ENCODE measurements at regions of chr17 and their contacts with region 1.

Region 1: DNA sequence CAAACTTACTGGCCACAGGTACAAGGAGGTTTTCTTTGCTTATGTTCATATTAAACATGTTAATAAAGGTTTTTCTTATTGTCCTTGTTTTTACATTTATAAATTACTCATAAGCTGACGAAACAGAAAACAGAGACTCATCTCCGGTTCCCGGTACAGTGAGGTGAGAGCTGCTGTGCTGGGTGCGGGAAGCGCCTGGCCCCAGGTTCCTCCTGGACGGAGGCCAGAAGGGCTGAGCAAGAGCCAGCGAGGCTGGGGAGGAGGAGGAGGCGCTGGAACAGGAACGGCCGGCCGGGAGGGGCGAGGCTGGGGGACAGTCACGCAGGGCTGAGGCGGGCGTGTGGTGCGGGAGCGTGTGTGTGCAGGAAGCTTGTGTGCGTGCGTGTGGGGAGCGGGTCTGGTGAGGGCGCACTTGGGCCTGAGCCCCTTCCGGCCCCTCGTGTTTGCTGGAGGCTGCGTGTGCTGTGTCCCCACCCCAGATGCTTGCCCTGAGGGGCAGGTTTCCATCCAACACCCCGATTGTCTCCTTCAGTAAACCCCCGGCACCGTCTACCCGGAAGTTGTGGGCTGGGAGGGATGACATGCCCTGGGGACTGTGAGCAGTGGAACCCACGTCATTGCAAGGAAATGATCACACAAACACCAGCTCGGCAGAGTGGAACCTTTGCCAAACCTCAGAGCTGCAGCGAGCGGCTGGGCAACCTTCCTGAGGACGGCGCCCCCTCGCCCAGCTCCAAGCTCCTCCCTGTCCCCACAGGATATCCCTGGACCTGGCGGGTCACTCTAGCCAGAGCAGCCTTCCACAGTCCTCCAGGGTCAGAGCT is 19.5 kb downstream of the CD7 start:
- DNase-seq: peak; percentile 96
- H3K4me3 ChIP-seq: peak overlapping the region; percentile 11 to 52 (median 45)
- H3K27ac ChIP-seq: peak overlapping the region; percentile 79 to 86 (median 84)
- H3K4me1 ChIP-seq: peaks cover 0 to 59% (median 51%) of the 10 kb centered on the region in 4 donors
- H3K27me3 ChIP-seq: no peaks in the 10 kb centered on the region
- CTCF ChIP-seq: no peak
- EP300 ChIP-seq: peak; percentile 39 to 94 (median 83)
- POLR2A ChIP-seq: peak; percentile 12 to 25

Region 2: GRCh38 chr17:82236142-82236981 is 61.6 kb before region 1 on chr17:
- intact Hi-C with region 1: loop called (anchors 2 kb)
- DNase-seq: peak; percentile 89
- H3K4me3 ChIP-seq: no peak overlapping the region
- H3K27ac ChIP-seq: peak overlapping the region; percentile 62 to 90 (median 86)
- H3K4me1 ChIP-seq: peaks cover 0 to 83% (median 70%) of the 10 kb centered on the region in 4 donors
- H3K27me3 ChIP-seq: no peaks in the 10 kb centered on the region
- CTCF ChIP-seq: peak; percentile 85 to 97 (median 96)
- EP300 ChIP-seq: no peak
- POLR2A ChIP-seq: no peak

Region 3: GRCh38 chr17:82320956-82321927 is 23.3 kb after region 1 on chr17:
- intact Hi-C with region 1: loop called (anchors 2 kb)
- DNase-seq: no peak
- H3K4me3 ChIP-seq: peak overlapping the region in 1 of 4 donors; percentile 25
- H3K27ac ChIP-seq: no peak overlapping the region
- H3K4me1 ChIP-seq: peaks cover 0 to 11% (median 6%) of the 10 kb centered on the region in 4 donors
- H3K27me3 ChIP-seq: peaks cover under 1 to 7% (median 6%) of the 10 kb centered on the region in 3 donors
- CTCF ChIP-seq: peak; percentile 82 to 97 (median 90)
- EP300 ChIP-seq: no peak
- POLR2A ChIP-seq: no peak

Region 4: GRCh38 chr17:82332669-82333278 is 34.8 kb after region 1 on chr17:
- intact Hi-C with region 1: loop called (anchors 5 kb)
- DNase-seq: peak; percentile 85
- H3K4me3 ChIP-seq: peak overlapping the region; percentile 53 to 79 (median 60)
- H3K27ac ChIP-seq: peak overlapping the region; percentile 72 to 83 (median 79)
- H3K4me1 ChIP-seq: peaks cover 0 to 56% (median 48%) of the 10 kb centered on the region in 4 donors
- H3K27me3 ChIP-seq: no peaks in the 10 kb centered on the region
- CTCF ChIP-seq: no peak
- EP300 ChIP-seq: no peak
- POLR2A ChIP-seq: no peak

Region 5: GRCh38 chr17:82450170-82451106 is 152.5 kb after region 1 on chr17 and contains the start of gene CYBC1:
- intact Hi-C with region 1: loop called (anchors 5 kb)
- DNase-seq: peak; percentile 97
- H3K4me3 ChIP-seq: peak within 1 kb of the TSS; percentile 83 to 87 (median 84)
- H3K27ac ChIP-seq: peak within 1 kb of the TSS; percentile 88 to 92 (median 90)
- H3K4me1 ChIP-seq: peaks cover 0 to 26% (median 22%) of the 10 kb centered on the region in 4 donors
- H3K27me3 ChIP-seq: no peaks in the 10 kb centered on the region
- CTCF ChIP-seq: no peak
- EP300 ChIP-seq: peak in 2 of 4 donors; percentile 53 to 80
- POLR2A ChIP-seq: peak; percentile 90 to 93
- total RNA-seq, gene CYBC1: 22.8 to 76.6 (median 46.7) TPM